CD8-positive, alpha-beta memory T cell (primary cell): ENCODE measurements at regions of chr7 and their contacts with region 1.

Region 1: DNA sequence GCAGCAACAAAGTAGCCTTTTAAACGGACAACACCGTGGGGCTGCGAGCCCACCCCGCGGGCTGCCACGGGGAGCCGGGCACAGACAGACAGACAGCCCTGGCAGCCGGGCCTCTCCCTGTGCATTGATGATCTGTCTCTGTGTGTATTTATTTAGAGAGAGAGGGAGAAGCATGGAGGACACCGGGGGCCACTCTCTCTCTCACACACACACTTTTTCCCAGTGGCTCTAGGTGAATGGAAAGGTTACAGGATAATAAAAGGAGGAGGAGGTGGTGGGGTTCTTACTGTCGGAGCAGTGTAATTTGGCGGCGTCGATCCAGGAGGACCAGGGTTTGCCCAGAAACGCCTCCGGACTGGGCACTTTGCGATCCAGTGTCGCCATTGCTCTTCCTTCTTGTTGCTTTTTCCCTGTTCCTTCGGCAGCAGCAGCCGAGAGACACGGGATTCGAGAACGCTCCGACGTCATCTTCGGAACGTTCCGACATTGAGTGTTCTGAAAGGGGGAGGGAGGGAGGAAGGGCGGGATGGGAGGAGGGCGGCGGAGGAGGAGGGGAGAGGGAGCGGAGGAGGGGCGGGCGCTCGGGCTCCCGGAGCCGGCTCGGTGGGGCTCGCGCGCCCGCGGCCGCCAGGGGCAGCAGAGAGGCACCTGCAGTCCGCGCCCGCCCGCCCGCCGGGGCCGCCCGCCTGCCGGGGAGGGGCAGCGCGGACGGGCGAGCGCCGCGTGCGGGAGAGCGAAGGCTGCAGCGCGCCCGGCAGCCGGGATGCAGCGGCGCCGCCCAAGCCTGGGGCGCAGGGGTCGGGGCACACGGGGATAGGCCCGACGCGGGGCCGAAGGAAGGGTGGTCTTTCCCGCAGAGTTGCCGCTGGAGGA is at the start of gene ATXN7L1:
- DNase-seq: peak; percentile 84 to 90 (median 87)
- H3K4me3 ChIP-seq: peak within 1 kb of the TSS; percentile 91
- H3K4me3 Mint-ChIP-seq: peak within 1 kb of the TSS; percentile 96 to 100 (median 98)
- H3K27ac ChIP-seq: peak within 1 kb of the TSS; percentile 73
- H3K27ac Mint-ChIP-seq: peak within 1 kb of the TSS; percentile 80 to 99 (median 94)
- H3K4me1 ChIP-seq: peaks cover 46% of the 10 kb centered on the region
- H3K4me1 Mint-ChIP-seq: peaks cover 44 to 79% (median 79%) of the 10 kb centered on the region in 3 donors
- H3K27me3 ChIP-seq: no peaks in the 10 kb centered on the region
- H3K27me3 Mint-ChIP-seq: no peaks in the 10 kb centered on the region
- total RNA-seq, gene ATXN7L1: 9.0 to 9.7 TPM

Region 2: GRCh38 chr7:105766421-105767073 is 109.8 kb before region 1 on chr7:
- CTCF ChIA-PET with region 1: interaction called, 11 read pairs
- POLR2A ChIA-PET with region 1: no interaction called
- DNase-seq: no peak
- H3K4me3 ChIP-seq: no peak overlapping the region
- H3K4me3 Mint-ChIP-seq: no peak overlapping the region
- H3K27ac ChIP-seq: no peak overlapping the region
- H3K27ac Mint-ChIP-seq: peak overlapping the region in 3 of 8 donors; percentile 22 to 50 (median 29)
- H3K4me1 ChIP-seq: peaks cover 3% of the 10 kb centered on the region
- H3K4me1 Mint-ChIP-seq: peaks cover 13 to 49% (median 28%) of the 10 kb centered on the region in 3 donors
- H3K27me3 ChIP-seq: no peaks in the 10 kb centered on the region
- H3K27me3 Mint-ChIP-seq: peaks cover 0 to 1% of the 10 kb centered on the region in 2 donors

Region 3: GRCh38 chr7:105849122-105849855 is 27.0 kb before region 1 on chr7:
- CTCF ChIA-PET with region 1: interaction called, 30 read pairs
- POLR2A ChIA-PET with region 1: no interaction called
- DNase-seq: peak; percentile 49 to 86 (median 62)
- H3K4me3 ChIP-seq: peak overlapping the region; percentile 25
- H3K4me3 Mint-ChIP-seq: peak overlapping the region; percentile 13 to 81 (median 75)
- H3K27ac ChIP-seq: peak overlapping the region; percentile 59
- H3K27ac Mint-ChIP-seq: peak overlapping the region; percentile 80 to 98 (median 94)
- H3K4me1 ChIP-seq: peaks cover 56% of the 10 kb centered on the region
- H3K4me1 Mint-ChIP-seq: peaks cover 73 to 85% (median 76%) of the 10 kb centered on the region in 3 donors
- H3K27me3 ChIP-seq: no peaks in the 10 kb centered on the region
- H3K27me3 Mint-ChIP-seq: no peaks in the 10 kb centered on the region

Region 4: DNA sequence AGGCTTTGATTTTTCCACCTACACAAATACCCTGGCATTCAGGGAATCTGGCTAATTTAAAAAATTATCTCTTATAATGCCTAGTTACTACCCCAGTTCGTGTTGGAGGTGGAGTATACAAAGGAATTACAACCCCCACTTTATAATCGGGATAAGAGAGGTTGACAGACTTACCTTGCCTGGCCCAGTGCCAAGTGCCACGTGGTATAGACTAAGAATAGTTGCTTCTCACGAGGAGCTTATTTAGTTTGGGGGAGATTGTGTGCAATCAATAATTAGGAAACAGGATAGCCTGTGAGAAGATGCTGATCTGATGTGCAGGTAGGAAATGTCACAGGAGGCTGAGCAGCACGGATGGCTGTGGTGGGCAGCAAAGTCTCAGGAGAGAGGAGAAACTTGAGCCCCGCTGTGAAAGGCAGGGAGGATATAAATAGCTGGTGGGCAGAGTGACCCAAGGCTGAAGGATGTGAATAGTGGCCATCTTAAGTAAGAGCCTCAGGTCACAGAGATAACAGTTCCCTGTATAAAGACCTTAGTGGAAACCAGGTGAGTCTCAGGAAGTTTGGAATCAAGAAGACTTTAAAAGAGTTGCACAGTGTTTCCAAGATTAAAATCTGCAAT is 11.4 kb after region 1 on chr7:
- CTCF ChIA-PET with region 1: interaction called, 13 read pairs
- POLR2A ChIA-PET with region 1: no interaction called
- DNase-seq: no peak
- H3K4me3 ChIP-seq: no peak overlapping the region
- H3K4me3 Mint-ChIP-seq: no peak overlapping the region
- H3K27ac ChIP-seq: no peak overlapping the region
- H3K27ac Mint-ChIP-seq: no peak overlapping the region
- H3K4me1 ChIP-seq: peaks cover 24% of the 10 kb centered on the region
- H3K4me1 Mint-ChIP-seq: peaks cover 32 to 50% (median 36%) of the 10 kb centered on the region in 3 donors
- H3K27me3 ChIP-seq: no peaks in the 10 kb centered on the region
- H3K27me3 Mint-ChIP-seq: no peaks in the 10 kb centered on the region

Region 5: GRCh38 chr7:106369352-106369751 is 493.0 kb after region 1 on chr7:
- CTCF ChIA-PET with region 1: no interaction called
- POLR2A ChIA-PET with region 1: no interaction called
- DNase-seq: no peak
- H3K4me3 ChIP-seq: no peak overlapping the region
- H3K4me3 Mint-ChIP-seq: no peak overlapping the region
- H3K27ac ChIP-seq: no peak overlapping the region
- H3K27ac Mint-ChIP-seq: no peak overlapping the region
- H3K4me1 ChIP-seq: no peaks in the 10 kb centered on the region
- H3K4me1 Mint-ChIP-seq: no peaks in the 10 kb centered on the region
- H3K27me3 ChIP-seq: no peaks in the 10 kb centered on the region
- H3K27me3 Mint-ChIP-seq: peaks cover 0 to under 1% of the 10 kb centered on the region in 2 donors